ENCODE measurements at regions of chr1 and their contacts with region 1.

Region 1: DNA sequence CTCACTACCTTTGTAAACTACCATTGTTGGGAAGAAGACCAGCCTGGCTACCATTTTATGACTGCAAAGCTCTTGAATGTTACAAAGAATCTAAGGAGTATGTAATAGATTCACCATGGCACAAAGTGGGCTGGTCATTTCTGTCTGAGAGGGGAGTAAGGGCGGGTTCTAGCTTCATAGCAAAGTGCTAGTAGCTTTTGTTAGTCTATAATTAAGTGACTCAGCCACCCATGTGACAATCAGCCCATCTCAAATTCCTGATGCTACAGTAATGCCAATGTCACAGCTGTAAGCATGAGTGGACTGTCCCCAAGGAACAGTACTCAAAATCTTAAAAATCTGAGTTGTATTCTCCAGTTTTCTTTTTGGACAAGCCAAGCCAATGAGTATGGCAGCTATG is 15.4 kb upstream of the OTUD3 start:
- DNase-seq: no peak

Region 2: GRCh38 chr1:19654386-19654785 is 212.4 kb before region 1 on chr1:
- CTCF ChIA-PET with region 1: no interaction called
- POLR2A ChIA-PET with region 1: no interaction called
- DNase-seq: no peak

Region 3: DNA sequence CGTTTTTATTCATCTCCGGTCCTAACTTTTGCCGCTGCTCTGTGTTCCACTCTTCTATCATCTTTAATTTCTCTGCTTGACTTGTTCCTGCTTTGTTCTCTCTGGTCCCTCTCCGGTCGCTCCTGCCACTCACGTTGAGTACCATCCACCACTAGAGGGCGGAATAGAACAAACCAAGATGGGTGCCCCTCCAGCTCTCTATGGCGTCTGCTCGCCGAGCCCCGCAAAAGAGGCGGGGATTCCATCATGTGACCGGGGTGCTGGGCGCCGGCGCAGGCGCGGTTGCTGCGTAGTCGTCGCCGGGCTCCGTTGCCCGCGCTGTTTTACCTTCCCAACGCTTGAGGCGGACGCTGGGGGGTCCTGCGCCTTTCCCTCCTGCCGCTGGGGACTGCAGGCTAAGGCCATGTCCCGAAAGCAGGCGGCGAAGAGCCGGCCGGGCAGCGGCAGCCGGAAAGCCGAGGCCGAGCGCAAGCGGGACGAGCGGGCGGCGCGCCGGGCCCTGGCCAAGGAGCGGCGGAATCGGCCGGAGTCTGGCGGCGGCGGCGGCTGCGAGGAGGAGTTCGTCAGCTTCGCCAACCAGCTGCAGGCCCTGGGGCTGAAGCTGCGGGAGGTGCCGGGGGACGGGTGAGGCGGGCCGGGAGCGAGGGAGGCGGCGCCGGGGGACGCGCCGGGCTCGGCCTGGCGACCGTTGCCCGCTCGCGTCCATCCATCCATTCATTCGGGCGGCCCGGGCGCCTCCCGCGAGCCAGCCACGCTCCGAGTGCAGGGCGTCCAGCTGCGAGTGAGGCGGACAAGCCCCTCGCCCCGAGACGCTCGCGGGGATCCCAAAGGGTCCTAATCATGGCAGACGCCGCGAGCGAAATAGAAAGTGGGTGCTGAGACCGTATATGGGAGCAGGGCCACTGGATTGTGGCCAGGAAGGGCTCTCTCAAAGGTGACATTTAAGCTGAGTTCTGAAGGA is 15.6 kb after region 1 on chr1 and contains the start of gene OTUD3:
- CTCF ChIA-PET with region 1: interaction called, 7 read pairs
- POLR2A ChIA-PET with region 1: interaction called, 11 read pairs
- DNase-seq: peak; percentile 98

Region 4: DNA sequence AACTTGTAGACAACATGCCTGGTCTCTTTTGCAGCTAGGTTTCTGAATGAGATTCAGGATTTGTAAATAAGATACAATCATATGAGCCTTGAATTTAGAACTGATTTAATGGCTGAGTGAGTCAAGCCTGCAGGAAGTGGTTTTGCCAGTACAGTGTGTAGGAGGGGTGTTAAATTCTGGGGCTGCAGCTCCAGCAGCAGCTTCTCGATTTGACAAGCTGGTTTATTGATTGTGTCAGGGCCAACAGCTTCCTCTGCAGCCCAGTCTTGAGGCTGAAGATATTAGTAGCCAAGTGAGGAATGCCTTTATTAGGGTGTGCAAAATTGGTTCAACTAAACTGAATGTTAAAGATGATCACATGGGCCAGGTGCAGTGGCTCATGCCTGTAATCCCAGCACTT is 191.8 kb after region 1 on chr1:
- CTCF ChIA-PET with region 1: no interaction called
- POLR2A ChIA-PET with region 1: no interaction called
- DNase-seq: no peak

Measured in HEK293T (cell line).